Mucosa of descending colon (tissue), 3 donors: ENCODE measurements at regions of chr6 and their contacts with region 1.

Region 1: GRCh38 chr6:33248925-33249731 is 22.5 kb downstream of the VPS52 start:
- DNase-seq: peak; percentile 98 to 99 (median 99)
- ATAC-seq: peak; percentile 95
- H3K4me3 ChIP-seq: peak overlapping the region; percentile 7
- H3K4me1 ChIP-seq: peaks cover 15% of the 10 kb centered on the region
- CTCF ChIP-seq: no peak

Region 2: GRCh38 chr6:33112148-33112547 is 137.0 kb before region 1 on chr6:
- intact Hi-C with region 1: loop called (anchors 5 to 10 kb)
- DNase-seq: peak in 1 of 3 donors; percentile 59
- ATAC-seq: peak; percentile 89
- H3K4me3 ChIP-seq: no peak overlapping the region
- H3K4me1 ChIP-seq: no peaks in the 10 kb centered on the region
- CTCF ChIP-seq: no peak

Region 3: GRCh38 chr6:33118525-33119123 is 130.5 kb before region 1 on chr6:
- intact Hi-C with region 1: loop called (anchors 5 to 10 kb)
- DNase-seq: peak in 1 of 3 donors; percentile 66
- ATAC-seq: peak; percentile 67
- H3K4me3 ChIP-seq: no peak overlapping the region
- H3K4me1 ChIP-seq: no peaks in the 10 kb centered on the region
- CTCF ChIP-seq: peak; percentile 42